ENCODE measurements at regions of chr12 and their contacts with region 1.

Region 1: DNA sequence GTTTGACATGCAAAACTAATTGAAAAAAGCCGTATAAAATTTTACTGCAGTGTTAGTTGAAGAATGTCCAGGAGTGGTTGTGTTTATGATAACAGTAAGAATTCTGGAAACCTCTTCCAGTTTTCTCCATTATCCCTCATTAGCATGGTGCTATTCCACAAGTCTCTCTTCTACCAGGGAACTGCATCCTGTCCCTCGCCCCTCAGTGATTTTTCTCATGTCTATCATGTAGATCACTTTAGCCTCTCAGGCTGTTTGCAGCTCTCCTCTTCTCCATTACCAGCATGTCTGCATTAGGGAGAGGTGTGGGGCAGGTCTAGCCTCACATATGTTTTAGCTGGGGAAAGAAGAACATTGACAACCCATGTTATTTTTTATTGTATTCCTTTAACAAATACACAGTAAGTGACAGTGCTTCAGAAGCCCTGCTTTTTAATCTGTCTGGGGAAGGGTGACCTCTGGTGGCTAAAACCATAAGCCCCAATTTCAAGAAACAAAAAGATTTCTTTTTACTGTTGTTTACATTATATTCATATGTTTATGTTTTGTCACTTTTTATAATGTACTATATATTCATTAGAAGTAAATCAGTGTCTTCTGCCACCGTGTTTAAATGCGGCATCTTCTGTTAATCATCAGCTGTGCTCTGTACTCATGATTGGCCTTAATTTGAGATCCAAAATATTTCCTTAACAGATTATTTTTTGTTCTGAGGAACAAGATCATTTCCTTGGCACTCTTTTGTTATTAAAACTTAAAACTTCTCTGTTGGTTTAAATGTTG is 70.7 kb downstream of the RASSF8 start:
- DNase-seq: no peak
- ATAC-seq: peak; percentile 60

Region 2: DNA sequence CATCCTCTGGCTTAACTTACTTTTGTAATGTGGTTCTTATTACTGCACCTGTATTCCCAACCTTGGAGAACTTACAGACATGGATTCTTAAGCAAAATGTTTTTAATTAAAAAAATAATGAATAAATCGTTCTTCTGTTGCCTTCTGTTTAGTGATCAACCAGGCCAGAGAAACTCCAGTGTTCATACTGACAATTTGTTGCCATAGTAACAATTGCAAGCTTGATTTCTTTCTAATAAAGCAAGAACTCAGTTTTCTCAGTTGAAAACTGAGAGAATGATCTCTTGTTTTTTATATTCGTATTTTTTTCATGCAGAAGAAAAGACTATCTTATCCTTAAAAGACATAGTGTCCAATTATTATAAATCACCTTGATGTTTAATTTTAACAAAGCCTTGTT is 369.5 kb before region 1 on chr12:
- intact Hi-C with region 1: no loop called
- DNase-seq: no peak
- ATAC-seq: no peak

Region 3: DNA sequence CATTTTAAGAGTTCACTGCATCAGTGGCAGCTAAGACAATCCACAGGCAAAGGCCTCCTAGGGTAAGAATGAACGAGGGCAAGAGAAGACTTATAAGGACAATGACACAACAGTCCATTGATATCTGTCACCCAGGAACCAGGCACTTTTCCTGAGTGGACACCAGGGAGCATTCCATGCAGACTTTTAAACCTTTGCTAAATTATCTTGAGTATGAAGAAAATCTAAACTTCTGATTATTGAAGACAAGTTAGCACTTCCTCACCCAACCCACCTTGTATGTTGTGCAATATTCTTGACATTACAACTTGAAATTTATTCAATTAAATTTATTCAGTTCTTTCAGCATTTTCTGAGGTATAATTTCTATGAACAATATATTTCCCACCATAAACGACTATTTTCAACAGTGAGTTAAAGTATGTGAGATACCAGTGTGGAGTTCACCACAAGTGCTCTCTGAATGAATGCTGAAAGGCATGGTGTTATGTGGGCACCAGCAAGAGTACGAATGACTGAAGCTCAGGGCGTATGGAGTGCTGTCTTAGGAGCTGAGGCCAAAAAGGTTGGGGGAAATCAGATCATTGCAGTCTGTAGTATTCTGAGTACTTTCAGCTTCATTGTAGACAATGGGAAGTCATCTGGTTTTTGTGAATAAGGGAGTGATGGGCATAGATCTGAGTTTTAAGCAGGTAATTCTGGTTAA is 351.8 kb before region 1 on chr12:
- intact Hi-C with region 1: loop called (anchors 5 kb)
- DNase-seq: no peak
- ATAC-seq: peak; percentile 60

Region 4: DNA sequence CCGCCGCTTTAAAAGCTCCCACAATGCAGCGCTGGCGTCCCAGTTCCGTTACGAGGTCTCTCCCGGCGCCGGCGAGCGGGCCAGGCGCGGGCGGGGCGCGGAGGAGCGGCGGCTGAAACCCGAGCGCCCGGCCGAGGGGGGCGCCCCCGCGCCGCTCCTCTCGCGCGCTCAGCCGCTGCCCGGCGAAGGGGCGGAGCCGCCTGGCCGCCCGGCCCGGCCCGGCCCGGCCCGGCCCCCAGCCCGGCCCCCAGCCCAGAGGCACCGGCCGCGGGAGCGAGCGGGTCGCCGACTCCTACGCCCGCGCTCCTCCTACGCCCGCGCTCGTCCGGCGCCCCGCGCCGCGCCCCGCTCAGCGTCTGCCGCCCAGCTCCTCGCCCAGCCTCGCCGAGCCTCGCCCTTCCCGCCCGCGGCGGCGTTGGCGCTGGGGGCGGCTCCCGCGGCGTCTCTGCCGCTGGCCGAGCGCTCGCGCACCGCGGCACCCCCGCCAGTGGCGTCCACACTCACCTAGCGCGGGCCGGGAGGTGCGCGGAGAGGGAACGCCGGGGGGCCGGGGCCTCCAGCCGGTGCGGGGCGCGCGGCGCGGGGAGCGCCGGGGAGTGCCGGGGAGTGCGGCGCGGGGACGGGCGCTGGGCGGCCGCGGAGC is 70.6 kb before region 1 on chr12 and contains the start of gene RASSF8:
- intact Hi-C with region 1: loop called (anchors 5 kb)
- DNase-seq: peak; percentile 87
- ATAC-seq: peak; percentile 96
- total RNA-seq, gene RASSF8: 26.2 TPM